ENCODE measurements at regions of chr10 and their contacts with region 1.

Region 1: DNA sequence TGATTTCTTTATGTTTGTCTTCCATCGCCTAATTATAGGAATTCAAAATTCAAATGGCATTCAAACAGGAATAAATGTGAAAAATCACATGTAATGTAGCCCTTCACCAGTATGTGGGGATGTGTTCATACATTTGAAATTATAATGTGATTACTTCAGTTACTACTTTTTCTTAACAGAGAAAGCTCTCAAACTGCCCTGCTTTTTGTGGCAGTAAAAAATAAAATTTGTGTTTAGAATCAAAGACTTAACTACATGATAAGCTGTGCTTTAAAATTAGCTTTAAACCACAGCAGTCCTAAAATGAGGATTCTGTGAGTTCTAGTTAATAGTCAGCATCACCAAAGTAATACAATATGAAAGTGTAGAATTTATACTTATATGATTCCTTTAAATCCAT is 7.8 kb upstream of the HERC4 start:
- DNase-seq: peak; percentile 51
- H3K4me3 Mint-ChIP-seq: no peak overlapping the region
- H3K27ac Mint-ChIP-seq: no peak overlapping the region
- H3K4me1 Mint-ChIP-seq: peaks cover 15% of the 10 kb centered on the region
- H3K27me3 Mint-ChIP-seq: no peaks in the 10 kb centered on the region
- CTCF ChIP-seq: peak; percentile 40

Region 2: DNA sequence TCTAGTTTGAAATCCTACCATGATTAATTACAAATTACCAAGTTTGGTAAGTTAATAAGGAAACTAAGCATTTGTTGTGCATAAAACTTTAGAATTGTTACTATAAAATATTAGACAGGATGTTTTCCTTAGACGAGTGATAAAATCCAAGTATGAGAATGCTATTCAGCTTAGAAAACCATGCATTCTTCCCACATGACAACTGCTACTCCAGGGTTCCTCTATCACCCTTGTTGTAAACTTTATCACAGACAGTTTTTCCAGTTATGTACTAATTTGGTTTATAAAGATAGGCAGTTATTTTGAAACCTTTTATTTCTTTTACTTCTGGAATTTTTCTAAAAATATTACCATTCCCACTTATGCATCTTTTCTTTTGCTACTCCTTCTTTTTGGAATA is 146.5 kb before region 1 on chr10:
- CTCF ChIA-PET with region 1: no interaction called
- POLR2A ChIA-PET with region 1: no interaction called
- intact Hi-C with region 1: no loop called
- DNase-seq: no peak
- H3K4me3 Mint-ChIP-seq: no peak overlapping the region
- H3K27ac Mint-ChIP-seq: no peak overlapping the region
- H3K4me1 Mint-ChIP-seq: no peaks in the 10 kb centered on the region
- H3K27me3 Mint-ChIP-seq: no peaks in the 10 kb centered on the region
- CTCF ChIP-seq: no peak

Region 3: GRCh38 chr10:68151453-68151852 is 68.6 kb after region 1 on chr10:
- CTCF ChIA-PET with region 1: interaction called, 182 read pairs
- POLR2A ChIA-PET with region 1: interaction called, 34 read pairs
- intact Hi-C with region 1: loop called (anchors 1 kb)
- DNase-seq: no peak
- H3K4me3 Mint-ChIP-seq: no peak overlapping the region
- H3K27ac Mint-ChIP-seq: no peak overlapping the region
- H3K4me1 Mint-ChIP-seq: peaks cover 9% of the 10 kb centered on the region
- H3K27me3 Mint-ChIP-seq: no peaks in the 10 kb centered on the region
- CTCF ChIP-seq: no peak

Measured in MCF 10A (cell line).